Activated naive CD4-positive, alpha-beta T cell treated with anti-CD3 and anti-CD28 coated beads for 36 hours (primary cell): ENCODE measurements at regions of chr10 and their contacts with region 1.

Region 1: GRCh38 chr10:29386342-29386999 is 97.6 kb downstream of the LYZL1 start:
- DNase-seq: peak; percentile 11
- H3K4me3 Mint-ChIP-seq: no peak overlapping the region
- H3K27ac Mint-ChIP-seq: no peak overlapping the region
- H3K4me1 Mint-ChIP-seq: no peaks in the 10 kb centered on the region
- H3K27me3 Mint-ChIP-seq: peaks cover 4% of the 10 kb centered on the region

Region 2: DNA sequence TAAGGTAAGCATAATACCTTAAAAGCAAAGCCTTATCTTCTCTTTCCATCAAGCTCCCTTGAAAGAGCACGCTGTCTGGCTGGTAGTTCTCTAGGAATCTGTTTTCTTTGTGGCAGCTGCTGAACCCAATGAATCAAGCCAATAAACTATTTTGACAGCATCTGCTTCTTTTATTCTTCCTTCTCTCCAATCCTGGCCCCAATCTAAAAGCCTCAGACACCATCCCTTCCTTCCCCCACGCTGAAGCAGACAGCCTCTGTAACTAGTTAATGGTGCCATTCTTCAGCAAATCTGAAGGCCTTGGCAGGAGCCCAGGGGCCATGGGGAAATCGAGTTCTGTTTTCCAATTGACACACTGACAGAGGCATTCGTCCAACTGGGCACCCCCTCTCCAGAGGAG is 284.2 kb before region 1 on chr10:
- CTCF ChIA-PET with region 1: no interaction called
- intact Hi-C with region 1: no loop called
- DNase-seq: no peak
- H3K4me3 Mint-ChIP-seq: no peak overlapping the region
- H3K27ac Mint-ChIP-seq: no peak overlapping the region
- H3K4me1 Mint-ChIP-seq: no peaks in the 10 kb centered on the region
- H3K27me3 Mint-ChIP-seq: peaks cover 8% of the 10 kb centered on the region

Region 3: GRCh38 chr10:29356786-29357330 is 29.6 kb before region 1 on chr10:
- CTCF ChIA-PET with region 1: no interaction called
- intact Hi-C with region 1: no loop called
- DNase-seq: no peak
- H3K4me3 Mint-ChIP-seq: no peak overlapping the region
- H3K27ac Mint-ChIP-seq: no peak overlapping the region
- H3K4me1 Mint-ChIP-seq: no peaks in the 10 kb centered on the region
- H3K27me3 Mint-ChIP-seq: peaks cover 1% of the 10 kb centered on the region

Region 4: DNA sequence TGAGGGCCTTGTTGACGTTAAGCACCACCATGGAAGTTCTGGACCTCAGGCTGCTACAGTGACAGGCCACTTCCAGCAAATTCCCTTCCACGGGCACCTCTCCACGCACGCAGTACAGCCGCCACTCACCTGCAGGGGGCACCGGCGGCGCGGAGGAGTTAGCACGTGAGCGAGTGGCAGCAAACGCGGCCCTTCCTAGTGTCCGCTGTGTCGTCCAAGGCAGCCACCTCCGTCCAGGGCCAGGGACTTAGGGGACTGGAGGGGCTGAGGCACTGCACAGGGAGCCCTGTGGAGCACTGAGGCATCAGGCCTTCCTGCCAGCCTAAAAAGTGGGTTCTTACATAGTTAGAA is 83.9 kb after region 1 on chr10:
- CTCF ChIA-PET with region 1: no interaction called
- intact Hi-C with region 1: no loop called
- DNase-seq: no peak
- H3K4me3 Mint-ChIP-seq: no peak overlapping the region
- H3K27ac Mint-ChIP-seq: no peak overlapping the region
- H3K4me1 Mint-ChIP-seq: no peaks in the 10 kb centered on the region
- H3K27me3 Mint-ChIP-seq: no peaks in the 10 kb centered on the region

Region 5: GRCh38 chr10:29517352-29517923 is 131.0 kb after region 1 on chr10:
- CTCF ChIA-PET with region 1: interaction called, 5 read pairs
- intact Hi-C with region 1: loop called (anchors 5 kb)
- DNase-seq: no peak
- H3K4me3 Mint-ChIP-seq: no peak overlapping the region
- H3K27ac Mint-ChIP-seq: no peak overlapping the region
- H3K4me1 Mint-ChIP-seq: no peaks in the 10 kb centered on the region
- H3K27me3 Mint-ChIP-seq: no peaks in the 10 kb centered on the region

Region 6: DNA sequence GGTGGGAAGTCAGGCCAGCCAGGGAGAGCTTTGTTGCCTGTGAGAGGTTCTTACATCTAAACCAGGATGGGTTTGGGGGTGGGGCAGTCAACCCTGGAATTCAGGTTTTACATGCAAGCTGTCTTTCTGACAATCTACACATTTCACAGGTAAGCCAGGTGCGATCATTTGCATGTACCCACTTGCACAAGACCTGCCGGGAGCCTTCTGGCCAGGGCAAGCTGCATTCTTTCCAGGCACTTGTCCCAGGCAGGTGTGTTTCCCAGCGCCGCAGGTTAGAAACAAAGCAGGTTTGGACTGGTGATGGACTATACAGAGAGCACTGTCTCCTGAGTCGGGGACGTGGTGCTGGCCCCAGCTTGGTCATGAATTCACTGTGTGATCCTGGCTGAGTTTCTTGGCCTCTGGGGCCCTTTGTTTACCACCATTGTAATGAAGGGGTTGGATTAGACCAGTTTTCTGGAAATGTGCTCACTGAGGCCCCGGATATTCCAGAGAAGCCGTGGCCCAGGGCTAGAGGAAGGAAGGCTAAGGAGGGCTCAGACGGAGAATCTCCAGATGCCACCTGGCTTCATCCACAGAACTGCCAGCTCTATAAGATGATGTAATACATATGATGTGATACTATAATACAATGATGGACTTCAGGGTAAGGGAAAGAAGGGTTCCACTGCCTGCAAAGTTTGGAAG is 453.5 kb after region 1 on chr10:
- CTCF ChIA-PET with region 1: no interaction called
- intact Hi-C with region 1: no loop called
- DNase-seq: no peak
- H3K4me3 Mint-ChIP-seq: no peak overlapping the region
- H3K27ac Mint-ChIP-seq: no peak overlapping the region
- H3K4me1 Mint-ChIP-seq: no peaks in the 10 kb centered on the region
- H3K27me3 Mint-ChIP-seq: peaks cover 3% of the 10 kb centered on the region